ENCODE measurements at regions of chr6 and their contacts with region 1.

Region 1: GRCh38 chr6:156776840-156777576 is at the start of gene ARID1B:
- DNase-seq: peak; percentile 74 to 90 (median 80)
- ATAC-seq: peak; percentile 62 to 64
- H3K4me3 Mint-ChIP-seq: peak within 1 kb of the TSS; percentile 83 to 98 (median 96)
- H3K27ac Mint-ChIP-seq: peak within 1 kb of the TSS; percentile 93 to 99 (median 98)
- H3K4me1 Mint-ChIP-seq: peaks cover 17 to 40% (median 28%) of the 10 kb centered on the region in 4 donors
- H3K27me3 Mint-ChIP-seq: no peaks in the 10 kb centered on the region
- polyA plus RNA-seq, gene ARID1B: 9.0 to 18.6 (median 11.2) TPM

Region 2: DNA sequence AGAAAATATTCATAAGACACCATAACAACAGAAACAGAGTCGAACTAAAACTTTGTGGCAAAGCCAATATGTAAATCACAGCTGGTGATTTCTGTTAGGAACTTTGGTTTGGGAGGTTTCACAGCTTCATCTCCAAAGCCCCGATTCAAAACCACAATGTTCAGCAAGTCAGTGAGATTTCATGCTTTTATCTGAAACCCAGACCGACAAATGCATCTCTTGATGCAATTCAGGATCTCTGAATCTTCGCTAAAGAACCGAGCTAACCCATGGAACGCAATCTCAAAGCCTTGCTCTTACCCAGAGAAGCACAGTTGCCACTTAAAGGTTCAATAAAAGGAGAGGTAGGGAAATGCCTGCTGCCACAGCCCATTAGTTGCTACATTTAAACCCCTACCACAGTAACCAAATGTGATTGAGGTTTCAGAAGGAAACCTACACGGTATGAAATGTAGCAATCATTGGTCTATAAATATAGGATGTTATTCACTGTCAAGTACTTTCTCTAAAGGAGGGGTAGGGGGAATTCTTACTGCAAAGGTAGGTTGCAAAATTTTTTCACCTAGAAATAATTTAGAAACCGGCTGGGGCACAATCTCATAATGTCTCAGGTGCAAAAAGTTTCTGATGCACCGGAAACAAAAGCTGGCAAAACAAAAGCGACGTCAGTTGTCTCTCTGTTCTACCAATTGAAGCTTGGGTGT is 380.8 kb before region 1 on chr6:
- POLR2A ChIA-PET with region 1: interaction called, 13 read pairs
- DNase-seq: peak in 7 of 10 donors; percentile 17 to 81 (median 55)
- ATAC-seq: peak; percentile 82 to 84
- H3K4me3 Mint-ChIP-seq: peak overlapping the region; percentile 69 to 85 (median 82)
- H3K27ac Mint-ChIP-seq: peak overlapping the region; percentile 59 to 98 (median 96)
- H3K4me1 Mint-ChIP-seq: peaks cover 20 to 74% (median 66%) of the 10 kb centered on the region in 4 donors
- H3K27me3 Mint-ChIP-seq: peaks cover 0 to 2% (median 0%) of the 10 kb centered on the region in 5 donors

Region 3: DNA sequence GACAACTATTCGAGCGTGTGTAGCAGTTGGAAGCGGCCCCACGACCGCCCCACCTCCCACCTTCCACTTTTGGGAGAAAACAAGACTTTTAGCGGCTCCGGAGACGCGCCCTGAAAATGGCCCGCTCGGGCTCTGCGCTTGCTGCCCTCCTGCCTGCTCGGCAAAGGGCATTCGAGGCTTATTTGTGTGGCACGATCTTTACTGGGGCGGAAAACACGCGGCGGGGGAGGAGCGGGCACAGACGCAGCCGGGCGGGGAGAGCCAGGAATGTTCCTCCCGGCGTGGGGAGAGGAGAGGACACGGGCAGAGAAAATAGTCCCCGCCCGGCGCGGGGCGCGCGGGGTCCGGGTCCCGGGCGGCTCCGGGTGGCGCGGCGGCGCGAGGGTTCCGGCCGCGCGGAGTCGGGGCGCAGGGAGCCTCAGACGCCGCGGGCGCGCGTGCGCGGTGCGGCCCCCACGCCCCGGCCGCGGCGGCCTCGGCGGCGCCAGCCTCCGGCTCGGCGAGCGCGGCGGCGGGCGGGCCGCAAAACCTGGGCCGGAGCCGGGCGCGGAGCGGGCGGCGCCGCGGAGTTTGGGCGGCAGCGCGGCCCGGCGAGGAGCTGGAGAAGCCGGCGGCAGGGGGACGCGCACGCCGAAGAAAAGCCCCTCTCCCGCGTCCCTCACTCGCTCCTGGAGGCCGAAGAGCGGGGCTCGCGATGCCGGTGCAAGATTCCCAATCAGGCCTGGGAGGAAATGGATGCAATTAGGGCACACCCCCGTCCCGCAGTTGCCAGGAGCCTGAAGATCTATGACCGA is 89.8 kb before region 1 on chr6:
- POLR2A ChIA-PET with region 1: interaction called, 109 read pairs
- DNase-seq: peak; percentile 64 to 87 (median 83)
- ATAC-seq: peak; percentile 83 to 85
- H3K4me3 Mint-ChIP-seq: peak overlapping the region; percentile 76 to 97 (median 91)
- H3K27ac Mint-ChIP-seq: peak overlapping the region; percentile 90 to 99 (median 96)
- H3K4me1 Mint-ChIP-seq: peaks cover 8 to 51% (median 17%) of the 10 kb centered on the region in 4 donors
- H3K27me3 Mint-ChIP-seq: no peaks in the 10 kb centered on the region

Region 4: GRCh38 chr6:156719720-156720563 is 57.1 kb before region 1 on chr6:
- POLR2A ChIA-PET with region 1: interaction called, 23 read pairs
- DNase-seq: peak; percentile 56 to 82 (median 67)
- ATAC-seq: peak; percentile 91 to 95
- H3K4me3 Mint-ChIP-seq: peak overlapping the region; percentile 81 to 92 (median 86)
- H3K27ac Mint-ChIP-seq: peak overlapping the region; percentile 89 to 95 (median 94)
- H3K4me1 Mint-ChIP-seq: peaks cover 8 to 25% (median 18%) of the 10 kb centered on the region in 4 donors
- H3K27me3 Mint-ChIP-seq: no peaks in the 10 kb centered on the region

Region 5: DNA sequence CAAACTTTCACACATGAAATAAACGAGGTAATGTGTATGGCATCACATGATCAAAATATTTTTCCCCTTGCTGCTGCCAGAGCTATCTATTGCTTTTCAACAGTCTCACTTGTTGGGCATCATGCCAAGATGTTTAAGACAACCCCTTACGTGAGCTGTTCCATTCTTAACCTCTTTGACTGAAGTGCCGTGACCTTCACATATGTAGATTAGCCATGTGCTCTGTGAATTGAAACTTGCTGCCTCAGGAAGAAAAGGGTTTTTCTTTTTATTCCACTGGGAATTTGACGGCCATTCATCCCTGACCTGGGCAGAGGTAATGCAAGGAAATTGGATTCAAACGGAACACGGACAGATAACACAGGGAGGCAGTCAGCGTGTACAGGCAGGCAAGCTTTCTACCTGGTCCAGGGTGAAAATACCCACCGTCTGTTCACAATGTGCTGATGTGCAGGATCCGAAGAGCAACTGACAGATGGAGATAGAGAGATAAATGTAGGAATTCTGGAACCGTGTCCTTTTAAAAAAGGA is 14.4 kb after region 1 on chr6:
- POLR2A ChIA-PET with region 1: interaction called, 15 read pairs
- DNase-seq: peak in 8 of 10 donors; percentile 35 to 78 (median 51)
- ATAC-seq: peak; percentile 96 to 97
- H3K4me3 Mint-ChIP-seq: peak overlapping the region in 9 of 10 donors; percentile 38 to 71 (median 49)
- H3K27ac Mint-ChIP-seq: peak overlapping the region in 8 of 10 donors; percentile 6 to 81 (median 60)
- H3K4me1 Mint-ChIP-seq: peaks cover 52 to 99% (median 92%) of the 10 kb centered on the region in 4 donors
- H3K27me3 Mint-ChIP-seq: no peaks in the 10 kb centered on the region

Region 6: DNA sequence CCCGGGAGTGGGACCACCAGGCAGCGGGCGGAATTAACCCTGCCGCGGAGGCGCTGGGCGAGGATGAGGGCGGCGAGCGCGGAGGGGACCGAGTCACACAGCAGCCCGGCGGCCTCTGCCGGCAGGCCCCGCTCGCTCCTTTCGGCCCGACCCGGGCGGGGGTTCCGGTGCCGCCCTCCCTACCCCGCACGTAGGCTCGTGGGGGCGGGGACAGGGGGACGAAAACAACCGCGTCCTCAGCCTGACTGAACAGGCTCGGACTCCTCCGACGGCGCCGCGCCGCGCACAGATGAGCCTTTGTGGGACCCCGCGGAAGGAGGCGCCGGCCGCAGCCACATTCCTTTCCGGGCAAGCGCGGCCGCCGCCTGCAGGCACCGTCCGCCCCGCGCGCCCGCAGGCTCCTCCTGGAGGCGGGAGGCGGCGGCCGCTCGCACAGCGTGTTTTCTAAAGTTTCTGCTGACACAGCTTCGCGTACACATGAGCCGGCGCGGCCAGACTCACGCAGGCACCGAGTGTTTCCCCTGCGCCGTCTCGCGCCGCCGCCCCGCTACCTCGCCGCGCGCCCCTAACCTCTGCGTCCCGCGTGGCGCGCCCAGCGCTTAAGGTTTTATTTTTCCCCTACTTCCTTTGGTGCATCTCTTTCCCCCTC is 244.5 kb after region 1 on chr6:
- POLR2A ChIA-PET with region 1: interaction called, 41 read pairs
- DNase-seq: peak; percentile 83 to 95 (median 90)
- ATAC-seq: peak; percentile 79 to 82
- H3K4me3 Mint-ChIP-seq: peak overlapping the region; percentile 91 to 98 (median 96)
- H3K27ac Mint-ChIP-seq: peak overlapping the region; percentile 85 to 100 (median 99)
- H3K4me1 Mint-ChIP-seq: peaks cover 15 to 73% (median 51%) of the 10 kb centered on the region in 4 donors
- H3K27me3 Mint-ChIP-seq: no peaks in the 10 kb centered on the region